Naive thymus-derived CD8-positive, alpha-beta T cell (primary cell): ENCODE measurements at regions of chr19 and their contacts with region 1.

Region 1: DNA sequence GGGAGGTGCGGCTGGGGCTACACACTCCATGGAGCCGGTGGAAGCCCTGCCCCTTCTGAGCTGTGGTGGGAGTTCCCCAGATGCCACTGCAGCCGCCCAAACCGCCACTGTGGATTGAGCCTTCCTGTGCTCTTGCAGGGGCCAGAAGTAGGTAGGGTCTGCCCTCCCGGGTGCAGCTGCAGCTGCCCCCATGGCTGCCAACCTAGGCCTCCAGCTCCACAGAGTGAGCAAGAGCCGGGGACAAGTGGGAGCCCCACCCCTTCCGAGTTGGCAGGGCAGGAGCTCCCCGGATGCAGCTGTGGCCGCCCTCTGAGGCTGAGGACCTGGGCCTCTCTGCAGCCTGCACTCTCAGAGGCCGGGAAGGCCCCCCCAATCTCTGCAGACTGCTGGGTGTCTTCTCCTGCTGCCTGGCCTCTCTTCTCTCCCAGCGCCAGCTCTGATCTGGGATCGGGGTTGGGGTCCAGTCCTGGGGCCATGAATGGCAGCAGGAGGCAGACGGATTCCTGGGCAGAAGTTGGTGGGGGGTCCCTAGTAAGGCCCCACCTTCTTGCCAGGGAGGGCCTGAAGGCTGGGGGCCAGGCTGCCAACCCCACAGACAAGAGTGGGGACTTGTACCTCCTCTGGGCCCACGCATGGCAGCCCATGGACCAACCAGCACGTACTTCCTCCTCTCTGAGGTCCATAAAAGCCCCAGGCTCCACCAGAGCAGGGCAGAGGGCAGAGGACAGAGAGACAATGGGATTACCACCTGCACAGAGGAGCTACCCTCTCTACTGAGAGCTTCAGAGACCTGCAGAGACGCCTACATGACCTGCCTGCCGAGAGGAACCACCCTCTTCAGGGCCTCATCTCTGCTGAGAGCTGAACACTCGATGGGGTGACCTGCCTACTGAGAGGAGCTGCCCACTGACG is 28.9 kb downstream of the AP2S1 start:
- DNase-seq: peak; percentile 38 to 74 (median 54)
- ATAC-seq: peak; percentile 88 to 91
- H3K4me3 Mint-ChIP-seq: peak overlapping the region; percentile 26 to 71 (median 61)
- H3K27ac Mint-ChIP-seq: peak overlapping the region; percentile 87 to 97 (median 94)
- H3K4me1 Mint-ChIP-seq: peaks cover 17 to 51% (median 30%) of the 10 kb centered on the region in 4 donors
- H3K27me3 Mint-ChIP-seq: no peaks in the 10 kb centered on the region

Region 2: DNA sequence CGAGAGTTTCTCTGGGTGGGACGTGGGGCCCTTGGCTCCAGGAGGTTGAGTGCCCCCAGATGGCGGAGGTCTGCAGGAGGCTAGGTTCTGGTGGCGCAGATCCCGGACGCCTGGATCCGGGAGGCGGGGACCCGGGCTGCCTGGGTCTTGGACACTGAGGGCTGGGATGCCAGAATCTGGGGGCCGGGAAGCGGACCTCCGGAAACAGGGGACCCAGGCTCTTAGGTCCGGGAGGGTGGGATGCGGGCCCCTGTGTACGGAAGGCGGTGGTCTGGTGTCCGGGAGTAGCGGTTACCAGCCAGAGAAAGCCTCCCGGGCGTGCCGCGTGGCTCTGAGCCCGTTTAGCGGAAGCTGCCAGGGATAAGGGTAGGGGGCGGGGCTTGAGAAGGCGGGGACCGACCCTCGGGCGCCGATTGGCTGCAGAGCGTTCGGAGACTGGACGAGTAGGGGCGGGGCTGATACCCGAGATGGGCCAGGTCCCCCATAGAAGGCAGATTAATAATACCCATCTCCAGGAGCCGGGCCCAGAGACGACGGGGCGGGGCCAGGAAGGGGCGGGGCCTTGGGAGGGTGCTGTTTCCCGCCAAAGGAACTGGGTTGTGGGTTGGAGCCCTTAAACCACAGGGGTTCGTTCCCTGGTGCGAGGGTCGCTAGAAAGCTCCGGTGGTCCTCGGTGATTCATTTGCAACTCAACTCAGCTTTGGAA is 33.3 kb before region 1 on chr19 and contains the start of gene SLC1A5:
- POLR2A ChIA-PET with region 1: interaction called, 18 read pairs
- DNase-seq: peak; percentile 81 to 94 (median 88)
- ATAC-seq: peak; percentile 75 to 86
- H3K4me3 Mint-ChIP-seq: peak within 1 kb of the TSS; percentile 81 to 93 (median 90)
- H3K27ac Mint-ChIP-seq: peak within 1 kb of the TSS; percentile 56 to 94 (median 79)
- H3K4me1 Mint-ChIP-seq: peaks cover 25 to 64% (median 61%) of the 10 kb centered on the region in 4 donors
- H3K27me3 Mint-ChIP-seq: no peaks in the 10 kb centered on the region
- polyA plus RNA-seq, gene SLC1A5: 2.5 to 6.1 (median 4.1) TPM

Region 3: GRCh38 chr19:46798713-46799112 is 23.0 kb before region 1 on chr19:
- POLR2A ChIA-PET with region 1: no interaction called
- DNase-seq: no peak
- ATAC-seq: no peak
- H3K4me3 Mint-ChIP-seq: no peak overlapping the region
- H3K27ac Mint-ChIP-seq: no peak overlapping the region
- H3K4me1 Mint-ChIP-seq: no peaks in the 10 kb centered on the region
- H3K27me3 Mint-ChIP-seq: no peaks in the 10 kb centered on the region

Region 4: DNA sequence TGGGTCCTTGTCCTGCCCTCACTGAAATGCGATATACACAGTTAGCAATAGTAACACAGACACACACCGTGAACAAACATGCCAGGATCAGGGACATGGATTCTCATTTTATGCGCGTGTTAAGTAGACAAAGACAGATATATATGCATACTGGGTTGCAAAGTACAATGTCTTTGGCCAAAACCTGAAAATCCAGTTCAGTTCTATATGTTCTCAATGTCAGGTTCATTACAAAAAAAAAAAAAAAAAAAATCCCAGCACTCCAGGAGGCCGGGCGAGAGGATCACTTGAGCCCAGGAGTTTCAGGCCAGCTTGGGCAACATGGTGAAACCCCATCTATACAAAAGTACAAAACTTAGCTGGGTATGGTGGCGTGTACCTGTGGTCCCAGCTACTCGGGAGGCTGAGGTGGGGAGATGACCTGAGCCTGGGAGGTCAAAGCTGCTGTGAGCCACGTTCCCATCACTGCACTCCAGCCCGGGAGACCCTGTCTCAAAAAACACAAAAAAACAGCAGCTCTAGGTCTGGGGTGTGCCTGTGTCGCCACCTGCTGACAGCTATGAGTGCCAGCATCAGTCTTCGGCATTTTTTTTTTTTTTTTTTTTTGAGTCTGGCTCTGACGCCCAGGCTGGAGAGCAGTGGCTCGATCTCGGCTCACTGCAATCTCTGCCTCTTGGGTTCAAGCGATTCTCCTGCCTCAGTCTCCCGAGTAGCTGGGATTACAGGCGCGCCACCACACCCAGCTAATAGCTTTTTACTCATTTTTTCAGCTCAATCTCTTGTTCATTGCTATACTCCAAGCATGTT is 18.6 kb after region 1 on chr19:
- POLR2A ChIA-PET with region 1: interaction called, 11 read pairs
- DNase-seq: peak; percentile 23 to 69 (median 48)
- ATAC-seq: peak; percentile 72 to 89
- H3K4me3 Mint-ChIP-seq: no peak overlapping the region
- H3K27ac Mint-ChIP-seq: peak overlapping the region in 3 of 10 donors; percentile 13 to 46 (median 29)
- H3K4me1 Mint-ChIP-seq: peaks cover 0 to 9% (median 5%) of the 10 kb centered on the region in 4 donors
- H3K27me3 Mint-ChIP-seq: no peaks in the 10 kb centered on the region